ENCODE measurements at regions of chr7 and their contacts with region 1.

Region 1: GRCh38 chr7:50851451-50851850 is 68.8 kb upstream of the GRB10 start:
- DNase-seq: no peak
- ATAC-seq: no peak
- H3K4me3 Mint-ChIP-seq: no peak overlapping the region
- H3K27ac Mint-ChIP-seq: no peak overlapping the region
- H3K4me1 Mint-ChIP-seq: no peaks in the 10 kb centered on the region
- H3K27me3 Mint-ChIP-seq: no peaks in the 10 kb centered on the region

Region 2: GRCh38 chr7:50863053-50863452 is 11.6 kb after region 1 on chr7:
- CTCF ChIA-PET with region 1: no interaction called
- POLR2A ChIA-PET with region 1: interaction called, 11 read pairs
- intact Hi-C with region 1: no loop called
- DNase-seq: peak; percentile 23
- ATAC-seq: peak; percentile 26
- H3K4me3 Mint-ChIP-seq: no peak overlapping the region
- H3K27ac Mint-ChIP-seq: no peak overlapping the region
- H3K4me1 Mint-ChIP-seq: no peaks in the 10 kb centered on the region
- H3K27me3 Mint-ChIP-seq: peaks cover 3% of the 10 kb centered on the region

Measured in activated CD4-positive, alpha-beta T cell treated with anti-CD3 and anti-CD28 coated beads for 36 hours (primary cell).